Esophagus squamous epithelium (tissue), 5 donors: ENCODE measurements at regions of chr15 and their contacts with region 1.

Region 1: DNA sequence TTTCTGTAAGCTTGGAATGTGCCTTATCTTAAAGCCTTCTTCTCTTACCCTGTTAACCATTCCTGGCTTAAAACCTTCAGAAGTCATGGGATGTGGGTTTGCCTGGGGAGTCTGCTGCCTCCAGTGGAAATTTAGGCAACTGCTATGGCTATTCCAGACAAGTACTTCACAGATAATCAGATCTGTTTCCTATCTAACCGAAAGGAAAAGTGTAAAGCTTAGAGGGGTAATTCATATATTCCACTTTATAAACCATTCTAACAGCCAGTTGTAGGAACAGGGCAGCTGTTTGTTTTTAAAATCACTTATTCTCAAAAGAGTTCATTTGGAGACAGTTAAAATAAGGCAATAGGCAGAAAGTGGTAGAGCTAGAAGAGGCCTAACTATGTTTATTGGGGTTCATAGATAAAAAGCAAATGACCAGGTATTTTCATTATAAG is 219.9 kb downstream of the TCF12 start:
- DNase-seq: no peak
- H3K4me3 ChIP-seq: no peak overlapping the region
- H3K27ac ChIP-seq: no peak overlapping the region
- H3K4me1 ChIP-seq: peaks cover 0 to 40% (median 7%) of the 10 kb centered on the region in 3 donors
- H3K27me3 ChIP-seq: no peaks in the 10 kb centered on the region
- CTCF ChIP-seq: peak in 5 of 6 experiments; percentile 50 to 78 (median 69)
- POLR2A ChIP-seq: no peak

Region 2: DNA sequence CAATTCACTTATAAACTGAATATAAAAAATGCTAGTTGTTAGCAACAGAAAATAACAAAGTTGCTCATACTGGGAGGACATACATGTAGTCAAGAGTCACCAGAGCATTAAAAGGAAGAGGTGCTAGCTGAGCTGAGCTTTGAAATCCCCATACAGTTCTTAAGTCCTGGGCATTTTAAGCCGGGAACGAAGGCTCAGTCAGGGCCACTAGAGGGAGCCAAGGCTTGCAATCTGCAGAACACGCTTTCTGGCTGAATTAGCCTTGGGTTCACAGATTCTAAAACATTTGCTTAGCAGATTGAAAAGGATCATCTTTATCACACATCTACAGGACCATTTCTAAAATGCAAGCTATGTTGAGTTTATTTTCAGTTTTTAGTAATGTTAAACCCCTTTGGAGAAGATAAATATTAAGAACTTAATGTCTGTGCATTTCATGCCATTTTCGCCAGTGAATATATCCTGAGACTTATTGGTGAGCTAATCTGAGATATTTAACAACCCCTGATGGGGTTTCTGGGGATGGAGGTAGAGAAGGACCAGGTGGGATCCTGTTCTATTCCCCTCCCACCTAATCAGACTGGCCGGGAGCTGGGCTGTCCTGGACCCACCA is 647.2 kb before region 1 on chr15:
- intact Hi-C with region 1: loop called (anchors 5 kb)
- DNase-seq: no peak
- H3K4me3 ChIP-seq: no peak overlapping the region
- H3K27ac ChIP-seq: no peak overlapping the region
- H3K4me1 ChIP-seq: no peaks in the 10 kb centered on the region
- H3K27me3 ChIP-seq: no peaks in the 10 kb centered on the region
- CTCF ChIP-seq: peak; percentile 41 to 75 (median 72)
- POLR2A ChIP-seq: no peak

Region 3: DNA sequence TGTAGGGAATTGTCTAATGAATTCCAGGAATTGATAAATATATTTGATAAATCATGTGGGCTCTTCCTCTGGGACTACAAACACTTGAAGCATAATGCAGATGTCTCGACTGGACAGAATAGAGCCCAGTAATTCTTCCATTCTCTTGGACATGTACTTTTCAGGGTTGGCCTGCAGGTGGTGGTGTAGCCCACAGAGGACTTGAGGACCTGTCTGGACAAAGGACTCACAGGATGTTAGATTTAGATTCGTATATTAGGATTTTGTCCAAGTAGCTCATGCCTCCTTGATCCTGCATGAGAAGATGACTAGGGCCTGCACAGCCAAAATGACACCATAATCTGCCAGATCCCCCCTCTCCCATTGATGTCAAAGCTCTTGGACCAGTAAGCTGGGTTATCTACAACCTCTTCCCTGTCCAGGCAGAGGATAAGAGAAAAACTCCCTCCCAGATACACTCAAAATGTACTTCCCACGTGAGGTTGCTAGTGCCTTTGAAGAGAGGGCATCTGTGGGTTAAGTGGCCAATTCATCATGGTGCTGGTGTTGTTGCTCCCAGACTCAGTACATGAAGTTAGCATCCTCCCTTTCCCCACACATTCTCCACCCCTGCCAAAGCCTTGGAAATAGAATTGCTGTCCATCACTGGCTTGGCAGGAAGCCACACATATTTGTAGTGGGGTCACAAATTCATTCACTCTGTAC is 316.5 kb before region 1 on chr15:
- intact Hi-C with region 1: no loop called
- DNase-seq: no peak
- H3K4me3 ChIP-seq: no peak overlapping the region
- H3K27ac ChIP-seq: no peak overlapping the region
- H3K4me1 ChIP-seq: peaks cover 0 to 17% (median 0%) of the 10 kb centered on the region in 3 donors
- H3K27me3 ChIP-seq: no peaks in the 10 kb centered on the region
- CTCF ChIP-seq: peak in 5 of 6 experiments; percentile 47 to 75 (median 55)
- POLR2A ChIP-seq: no peak

Region 4: DNA sequence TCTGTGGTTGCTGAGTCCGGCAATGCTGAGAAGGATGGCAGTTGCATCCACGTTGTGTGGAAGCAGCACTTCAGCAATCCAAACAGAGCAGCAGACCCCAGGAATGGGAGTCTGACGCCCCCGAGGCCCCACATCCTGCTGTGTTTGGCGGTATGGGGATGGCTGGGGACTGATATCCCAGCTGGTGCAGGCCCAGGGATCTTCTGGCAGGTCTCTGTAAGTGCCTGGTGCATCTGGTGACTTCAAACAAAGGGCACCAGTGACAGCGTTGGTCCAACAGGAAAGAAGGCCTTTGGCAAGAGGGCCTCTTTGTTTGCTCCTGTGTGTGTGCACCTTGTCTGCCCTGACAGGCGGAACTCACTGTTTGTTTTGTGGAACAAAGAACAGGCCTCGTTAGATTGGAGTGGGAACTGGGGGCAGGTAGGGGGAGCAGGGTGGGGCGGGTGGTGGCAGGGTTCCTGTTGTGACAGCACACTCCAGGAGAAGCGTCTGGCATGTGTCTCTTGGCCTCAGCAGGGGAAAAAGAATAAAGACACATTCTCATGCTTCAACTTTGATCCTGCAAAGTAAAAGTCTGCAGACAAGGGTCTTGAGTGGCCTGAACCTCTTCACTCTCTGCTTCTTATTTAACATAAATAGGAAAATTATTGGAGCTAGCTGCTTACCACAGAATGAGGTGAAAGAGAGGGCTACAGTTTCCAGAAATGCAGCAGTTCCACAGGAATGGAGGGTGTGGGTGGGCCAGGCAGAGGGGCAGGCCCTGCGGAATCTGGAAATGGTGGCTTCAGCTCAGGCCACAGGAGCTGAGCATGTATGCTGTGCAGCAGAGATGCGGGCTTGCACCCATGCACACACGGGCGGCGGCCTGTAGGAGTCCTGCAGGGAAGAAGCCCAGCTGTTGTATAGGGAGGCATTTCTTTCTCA is 358.8 kb after region 1 on chr15:
- intact Hi-C with region 1: no loop called
- DNase-seq: no peak
- H3K4me3 ChIP-seq: no peak overlapping the region
- H3K27ac ChIP-seq: peak overlapping the region in 2 of 4 donors; percentile 23 to 41
- H3K4me1 ChIP-seq: peaks cover 0 to 21% (median 0%) of the 10 kb centered on the region in 3 donors
- H3K27me3 ChIP-seq: no peaks in the 10 kb centered on the region
- CTCF ChIP-seq: no peak
- POLR2A ChIP-seq: no peak

Region 5: GRCh38 chr15:57675481-57676181 is 537.3 kb after region 1 on chr15:
- intact Hi-C with region 1: no loop called
- DNase-seq: no peak
- H3K4me3 ChIP-seq: no peak overlapping the region
- H3K27ac ChIP-seq: no peak overlapping the region
- H3K4me1 ChIP-seq: no peaks in the 10 kb centered on the region
- H3K27me3 ChIP-seq: no peaks in the 10 kb centered on the region
- CTCF ChIP-seq: no peak
- POLR2A ChIP-seq: no peak